ENCODE measurements at regions of chr9 and their contacts with region 1.

Region 1: DNA sequence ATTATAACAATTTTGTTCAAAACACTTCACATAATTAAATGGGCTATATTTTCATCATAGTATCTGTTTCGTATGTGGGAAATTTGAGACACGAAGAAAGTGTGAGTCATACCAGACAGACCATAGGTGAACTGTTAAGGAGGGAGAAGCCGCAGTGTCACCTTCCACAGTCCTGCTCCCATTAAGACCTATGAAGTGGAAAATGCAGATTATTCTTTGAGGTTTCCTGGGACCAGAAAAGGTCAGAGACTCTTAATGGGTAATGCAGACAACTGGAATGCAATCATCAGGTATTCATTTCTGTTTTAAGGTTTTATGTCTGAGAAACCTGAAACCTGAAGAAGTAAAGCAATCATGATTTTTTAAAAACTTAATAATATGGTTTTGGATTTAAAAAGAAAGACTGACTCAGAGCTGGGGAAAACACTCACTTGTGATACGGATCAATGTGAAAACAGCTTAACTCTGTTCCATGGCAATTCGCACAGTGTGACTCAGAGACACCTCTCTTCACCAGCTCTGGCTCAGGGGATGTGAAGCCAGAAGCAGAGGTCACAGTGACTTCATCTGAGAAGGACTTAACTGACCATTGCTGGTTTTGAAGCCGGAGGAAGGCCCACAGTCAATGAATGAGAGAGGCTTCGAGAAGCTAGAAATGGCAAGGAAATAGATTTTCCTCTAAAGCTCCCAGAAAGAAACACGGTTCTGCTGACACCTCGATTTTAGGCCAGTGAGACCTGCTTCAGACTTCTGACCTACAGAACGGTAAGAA is 17.2 kb upstream of the GCNT1 start:
- DNase-seq: peak; percentile 49
- H3K4me3 Mint-ChIP-seq: peak overlapping the region; percentile 28
- H3K27ac Mint-ChIP-seq: peak overlapping the region; percentile 77
- H3K4me1 Mint-ChIP-seq: peaks cover 24% of the 10 kb centered on the region
- H3K27me3 Mint-ChIP-seq: peaks cover 8% of the 10 kb centered on the region

Region 2: DNA sequence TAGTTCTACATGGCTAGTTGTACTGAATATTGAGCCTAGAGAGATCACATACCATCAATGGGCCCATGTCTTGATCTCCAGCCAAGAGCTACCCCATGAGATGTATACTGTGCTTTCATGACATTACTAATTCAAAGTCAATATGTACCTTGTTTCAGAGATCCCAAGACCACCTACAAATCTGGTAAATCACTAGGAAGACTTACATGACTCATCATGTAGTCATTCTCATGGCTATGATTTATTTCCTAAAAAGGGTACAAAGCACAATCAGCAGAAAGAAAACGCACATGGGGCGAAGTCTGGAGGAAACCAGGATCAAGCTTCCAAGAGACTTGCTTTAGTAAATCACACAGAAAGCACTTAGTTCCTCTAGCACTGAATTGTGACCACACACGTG is 448.3 kb before region 1 on chr9:
- CTCF ChIA-PET with region 1: no interaction called
- intact Hi-C with region 1: no loop called
- DNase-seq: no peak
- H3K4me3 Mint-ChIP-seq: no peak overlapping the region
- H3K27ac Mint-ChIP-seq: peak overlapping the region; percentile 59
- H3K4me1 Mint-ChIP-seq: peaks cover 68% of the 10 kb centered on the region
- H3K27me3 Mint-ChIP-seq: no peaks in the 10 kb centered on the region

Region 3: DNA sequence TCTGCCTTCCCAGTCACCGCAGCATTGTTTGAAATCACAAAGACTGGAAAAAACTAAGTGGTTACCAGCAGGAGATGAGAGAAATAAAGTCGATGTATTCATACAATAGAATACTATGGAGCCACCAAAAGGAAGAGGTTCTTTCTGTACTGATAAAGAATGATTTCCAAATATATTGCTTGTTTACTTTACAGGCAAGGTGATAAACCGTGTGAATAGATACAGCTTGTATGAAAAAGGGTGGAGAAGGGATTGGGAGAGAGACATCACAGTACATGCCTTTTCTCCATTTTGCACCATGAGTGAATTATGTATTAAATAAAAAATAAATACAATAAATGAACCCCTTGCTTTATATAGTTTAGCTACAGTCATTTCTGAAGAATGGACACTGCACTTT is 139.2 kb before region 1 on chr9:
- CTCF ChIA-PET with region 1: no interaction called
- intact Hi-C with region 1: no loop called
- DNase-seq: no peak
- H3K4me3 Mint-ChIP-seq: no peak overlapping the region
- H3K27ac Mint-ChIP-seq: no peak overlapping the region
- H3K4me1 Mint-ChIP-seq: peaks cover 2% of the 10 kb centered on the region
- H3K27me3 Mint-ChIP-seq: peaks cover 6% of the 10 kb centered on the region

Region 4: DNA sequence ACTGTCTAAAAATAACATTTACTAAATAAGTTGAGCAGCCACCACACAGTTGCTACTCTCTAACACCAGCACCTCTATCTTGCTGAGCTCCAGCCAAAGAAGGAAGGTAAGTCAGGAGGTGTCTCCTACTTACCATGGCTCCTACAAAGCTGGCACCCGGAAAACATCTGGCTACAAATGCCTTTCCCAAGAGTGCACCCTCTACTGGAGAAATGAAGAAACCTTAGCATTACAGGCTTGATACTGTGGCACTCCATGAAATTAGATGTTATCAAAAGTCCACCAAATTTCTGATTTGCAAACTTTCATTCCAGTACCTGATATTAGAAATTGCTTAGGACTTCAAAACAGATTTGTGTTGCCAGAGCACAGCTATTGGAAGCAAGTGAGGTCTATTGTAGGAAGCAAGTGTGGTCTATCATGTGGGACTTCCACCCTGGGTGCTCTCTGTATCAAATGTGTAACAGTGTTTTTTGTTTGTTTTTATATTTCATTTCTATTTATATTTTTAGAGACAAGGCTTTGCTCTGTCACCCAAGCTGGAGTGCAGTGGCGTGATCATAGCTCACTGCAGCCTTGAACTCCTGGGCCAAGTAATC is 21.9 kb before region 1 on chr9:
- CTCF ChIA-PET with region 1: interaction called, 5 read pairs
- intact Hi-C with region 1: loop called (anchors 1 kb)
- DNase-seq: no peak
- H3K4me3 Mint-ChIP-seq: no peak overlapping the region
- H3K27ac Mint-ChIP-seq: no peak overlapping the region
- H3K4me1 Mint-ChIP-seq: peaks cover 17% of the 10 kb centered on the region
- H3K27me3 Mint-ChIP-seq: no peaks in the 10 kb centered on the region

Region 5: DNA sequence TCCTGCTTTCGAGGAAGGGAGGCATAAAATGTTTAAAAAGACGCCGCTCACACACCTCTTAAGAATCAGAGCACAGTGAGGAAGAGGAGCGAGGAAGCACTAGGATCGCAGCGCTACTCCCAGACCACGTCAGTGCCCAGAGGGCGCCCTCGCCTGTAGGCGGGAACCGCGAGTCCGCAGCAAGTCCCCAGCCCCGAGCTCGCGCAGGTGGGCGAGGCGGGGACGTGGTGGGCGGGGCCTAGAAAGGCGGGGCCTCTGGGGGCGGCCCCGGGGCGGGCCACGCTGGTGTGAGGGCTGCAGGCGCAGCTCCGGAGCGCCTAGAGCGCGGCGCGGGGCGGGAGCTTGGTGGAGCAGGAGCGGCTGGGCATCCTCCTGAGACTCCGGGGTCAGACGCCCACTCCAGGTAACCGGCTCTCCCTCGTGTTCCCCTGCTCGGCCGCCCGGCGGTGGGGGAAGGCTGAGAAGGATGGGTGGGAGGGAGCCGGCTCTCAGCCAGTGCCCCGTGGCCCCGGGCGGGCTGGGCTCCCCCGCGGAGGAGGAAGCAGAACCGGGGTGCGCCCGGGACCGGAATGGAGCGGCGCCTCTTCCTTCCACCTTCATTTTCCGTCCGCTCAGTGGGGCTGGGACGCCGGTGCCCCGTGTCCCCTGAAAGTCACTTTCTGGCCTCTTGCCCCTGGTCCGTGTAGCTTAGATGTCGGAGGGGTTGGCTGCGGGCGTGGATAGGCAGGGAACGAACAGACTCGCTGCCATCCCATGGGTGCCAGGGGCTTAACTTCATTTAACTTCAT is 17.4 kb after region 1 on chr9 and contains the start of gene GCNT1:
- CTCF ChIA-PET with region 1: interaction called, 4 read pairs
- intact Hi-C with region 1: loop called (anchors 2 kb)
- DNase-seq: peak; percentile 89
- H3K4me3 Mint-ChIP-seq: peak within 1 kb of the TSS; percentile 90
- H3K27ac Mint-ChIP-seq: no peak within 1 kb of the TSS
- H3K4me1 Mint-ChIP-seq: peaks cover 12% of the 10 kb centered on the region
- H3K27me3 Mint-ChIP-seq: peaks cover 8% of the 10 kb centered on the region
- total RNA-seq, gene GCNT1: 0.48 to 0.54 TPM

Region 6: GRCh38 chr9:76866689-76867088 is 425.0 kb after region 1 on chr9:
- CTCF ChIA-PET with region 1: no interaction called
- intact Hi-C with region 1: no loop called
- DNase-seq: no peak
- H3K4me3 Mint-ChIP-seq: no peak overlapping the region
- H3K27ac Mint-ChIP-seq: no peak overlapping the region
- H3K4me1 Mint-ChIP-seq: peaks cover 6% of the 10 kb centered on the region
- H3K27me3 Mint-ChIP-seq: peaks cover 26% of the 10 kb centered on the region